ENCODE measurements at regions of chr20 and their contacts with region 1.

Region 1: DNA sequence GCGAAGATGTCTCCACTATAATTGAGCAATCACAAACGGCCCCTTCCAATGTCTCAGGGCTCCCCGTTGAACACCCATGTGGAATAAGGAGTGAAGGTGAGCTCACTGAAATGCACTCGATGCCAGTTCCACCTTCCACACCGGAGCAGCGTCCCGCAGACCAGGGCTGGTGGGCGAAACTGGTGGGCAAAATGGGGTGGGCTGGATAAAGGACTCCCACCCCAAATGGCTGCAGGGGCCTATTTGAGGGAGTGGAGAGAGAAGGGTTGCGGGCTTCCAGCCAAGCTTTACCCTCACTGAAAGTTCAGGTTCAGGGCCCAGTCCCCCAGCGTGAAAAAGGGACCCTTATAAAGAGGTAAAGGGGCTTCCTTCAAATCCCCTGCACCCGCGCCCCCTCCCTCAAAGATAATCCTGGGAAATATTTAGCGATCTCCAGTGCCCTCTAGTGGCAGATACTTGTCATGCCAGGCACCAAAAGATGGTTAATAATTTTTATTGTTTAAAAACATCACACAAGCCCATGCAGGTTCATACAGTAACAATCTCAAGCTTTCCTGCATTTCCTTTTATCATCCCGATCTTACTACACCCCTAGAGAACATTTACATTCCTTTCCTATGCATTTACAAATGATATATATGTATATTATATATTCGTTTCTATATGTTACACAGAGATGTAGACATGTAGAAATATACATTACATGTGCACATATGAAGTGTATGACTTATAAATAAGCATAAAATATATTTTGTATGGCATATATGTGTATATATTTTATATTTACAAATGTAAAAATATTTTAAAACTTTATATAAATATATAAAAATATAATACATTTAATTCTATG is 58.2 kb upstream of the NKX2-2 start:
- DNase-seq: peak in 1 of 2 experiments; percentile 57
- H3K4me3 ChIP-seq: no peak overlapping the region; a peak in 1 of 8 replicates
- H3K27ac ChIP-seq: no peak overlapping the region
- H3K4me1 ChIP-seq: peaks cover 1 to 22% (median 9%) of the 10 kb centered on the region in 4 experiments
- H3K27me3 ChIP-seq: 0 out of 7 replicates have a peak, but pooled peaks cover 0 to 2% (median 0%) of the 10 kb centered on the region in 4 experiments
- CTCF ChIP-seq: peak; percentile 17 to 72 (median 71)
- EP300 ChIP-seq: no peak
- POLR2A ChIP-seq: no peak
- RAD21 ChIP-seq: peak; percentile 79 to 83

Region 2: DNA sequence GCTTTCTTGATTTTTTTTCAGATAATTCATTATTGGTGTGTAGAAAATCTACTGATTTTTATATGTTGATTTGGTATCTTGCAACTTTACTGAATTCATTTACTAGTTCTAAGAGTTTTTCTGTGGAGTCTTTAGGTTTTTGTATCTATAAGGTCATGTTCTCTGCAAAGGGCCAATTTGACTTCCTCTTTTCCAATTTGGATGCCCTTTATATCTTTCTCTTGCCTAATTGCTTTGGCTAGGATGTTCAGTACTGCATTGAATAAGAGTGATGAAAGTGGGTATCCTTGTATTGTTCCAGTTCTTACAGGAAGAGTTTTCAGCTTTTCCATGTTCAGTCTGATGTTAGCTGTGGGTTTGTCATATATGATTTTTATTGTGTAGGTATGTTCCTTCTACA is 160.3 kb before region 1 on chr20:
- CTCF ChIA-PET with region 1: no interaction called
- POLR2A ChIA-PET with region 1: no interaction called
- DNase-seq: no peak
- H3K4me3 ChIP-seq: no peak overlapping the region
- H3K27ac ChIP-seq: no peak overlapping the region
- H3K4me1 ChIP-seq: no peaks in the 10 kb centered on the region
- H3K27me3 ChIP-seq: no peaks in the 10 kb centered on the region
- CTCF ChIP-seq: no peak
- EP300 ChIP-seq: no peak
- POLR2A ChIP-seq: no peak
- RAD21 ChIP-seq: no peak

Region 3: GRCh38 chr20:21520702-21521595 is 51.1 kb before region 1 on chr20:
- CTCF ChIA-PET with region 1: interaction called, 79 read pairs
- POLR2A ChIA-PET with region 1: no interaction called
- DNase-seq: no peak
- H3K4me3 ChIP-seq: peak overlapping the region; percentile 32 to 59 (median 34); a peak in 7 of 8 replicates
- H3K27ac ChIP-seq: no peak overlapping the region
- H3K4me1 ChIP-seq: peaks cover 19 to 53% (median 31%) of the 10 kb centered on the region in 4 experiments
- H3K27me3 ChIP-seq: peaks cover 94 to 100% (median 100%) of the 10 kb centered on the region in 4 experiments
- CTCF ChIP-seq: peak; percentile 59 to 75 (median 72)
- EP300 ChIP-seq: no peak
- POLR2A ChIP-seq: no peak
- RAD21 ChIP-seq: peak; percentile 77 to 85

Region 4: GRCh38 chr20:21529863-21530262 is 42.2 kb before region 1 on chr20:
- CTCF ChIA-PET with region 1: interaction called, 79 read pairs
- POLR2A ChIA-PET with region 1: no interaction called
- DNase-seq: no peak
- H3K4me3 ChIP-seq: no peak overlapping the region
- H3K27ac ChIP-seq: no peak overlapping the region
- H3K4me1 ChIP-seq: peaks cover 0 to 8% (median 0%) of the 10 kb centered on the region in 4 experiments; a peak in 2 of 7 replicates
- H3K27me3 ChIP-seq: peaks cover 9 to 25% (median 15%) of the 10 kb centered on the region in 4 experiments
- CTCF ChIP-seq: peak in 2 of 3 experiments; percentile 51 to 62; a peak in 3 of 4 replicates
- EP300 ChIP-seq: no peak
- POLR2A ChIP-seq: no peak
- RAD21 ChIP-seq: peak; percentile 36 to 51; a peak in 3 of 4 replicates

Region 5: GRCh38 chr20:21548390-21549035 is 23.6 kb before region 1 on chr20:
- CTCF ChIA-PET with region 1: interaction called, 17 read pairs
- POLR2A ChIA-PET with region 1: no interaction called
- DNase-seq: no peak
- H3K4me3 ChIP-seq: no peak overlapping the region
- H3K27ac ChIP-seq: no peak overlapping the region
- H3K4me1 ChIP-seq: no peaks in the 10 kb centered on the region
- H3K27me3 ChIP-seq: no peaks in the 10 kb centered on the region
- CTCF ChIP-seq: no peak
- EP300 ChIP-seq: no peak
- POLR2A ChIP-seq: no peak
- RAD21 ChIP-seq: no peak

Region 6: DNA sequence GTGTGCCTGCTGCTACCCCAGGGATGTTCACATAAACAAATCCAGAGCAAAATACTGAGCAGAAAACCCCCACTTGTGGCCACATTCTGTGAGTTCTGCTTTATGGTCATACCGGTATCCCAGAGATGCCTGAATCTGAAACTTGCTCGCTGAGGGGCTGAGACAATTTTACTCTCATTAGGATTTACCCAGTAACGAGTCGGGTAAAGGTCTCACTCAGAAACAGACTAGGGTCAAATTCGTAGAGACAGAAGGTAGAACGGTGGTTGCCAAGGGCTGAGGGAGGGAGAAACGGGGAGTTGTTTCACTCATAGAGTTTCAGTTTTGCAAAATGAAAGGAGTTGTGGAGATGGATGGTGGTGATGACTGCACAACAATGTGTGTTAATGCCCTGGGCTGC is 12.8 kb before region 1 on chr20:
- CTCF ChIA-PET with region 1: interaction called, 43 read pairs
- POLR2A ChIA-PET with region 1: no interaction called
- DNase-seq: no peak
- H3K4me3 ChIP-seq: no peak overlapping the region
- H3K27ac ChIP-seq: no peak overlapping the region
- H3K4me1 ChIP-seq: peaks cover 0 to 7% (median 0%) of the 10 kb centered on the region in 4 experiments; a peak in 3 of 7 replicates
- H3K27me3 ChIP-seq: no peaks in the 10 kb centered on the region
- CTCF ChIP-seq: no peak
- EP300 ChIP-seq: no peak
- POLR2A ChIP-seq: no peak
- RAD21 ChIP-seq: no peak

Region 7: DNA sequence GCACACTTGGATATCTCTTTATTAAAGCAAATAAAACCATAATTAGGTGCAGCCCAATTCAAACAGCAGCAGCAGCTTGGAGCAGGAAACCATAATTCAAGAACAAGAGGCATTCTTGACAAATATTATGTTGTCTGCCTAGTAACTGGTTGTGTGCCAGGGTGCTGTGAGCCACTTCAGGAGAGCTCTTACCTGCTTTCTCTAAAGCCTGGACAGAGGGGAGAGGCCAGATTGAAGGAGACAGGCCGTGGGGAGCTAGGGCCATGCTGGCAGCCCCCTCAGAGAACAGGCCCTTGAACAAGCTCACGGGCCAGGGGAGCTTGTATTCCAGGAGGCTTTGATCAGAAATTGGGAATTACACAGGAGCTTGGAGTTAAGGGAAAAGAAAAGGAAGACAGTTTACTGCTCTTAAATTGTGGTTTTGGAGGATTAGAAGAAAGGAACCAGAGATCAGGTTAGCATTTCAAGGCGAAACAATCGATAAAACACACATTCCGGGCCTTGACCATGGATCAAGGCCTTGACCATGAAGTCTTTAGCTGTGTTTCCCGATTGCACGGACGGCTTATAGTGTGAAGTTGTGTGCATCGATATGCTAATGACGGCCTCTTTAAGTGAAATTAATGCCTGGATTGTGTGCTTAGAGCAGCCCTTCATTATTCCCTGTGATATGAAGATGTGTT is 11.6 kb after region 1 on chr20:
- CTCF ChIA-PET with region 1: interaction called, 43 read pairs
- POLR2A ChIA-PET with region 1: no interaction called
- DNase-seq: no peak
- H3K4me3 ChIP-seq: no peak overlapping the region
- H3K27ac ChIP-seq: no peak overlapping the region
- H3K4me1 ChIP-seq: no peaks in the 10 kb centered on the region
- H3K27me3 ChIP-seq: peaks cover 0 to 1% (median 0%) of the 10 kb centered on the region in 4 experiments; a peak in 1 of 7 replicates
- CTCF ChIP-seq: no peak
- EP300 ChIP-seq: no peak
- POLR2A ChIP-seq: no peak
- RAD21 ChIP-seq: no peak

Region 8: DNA sequence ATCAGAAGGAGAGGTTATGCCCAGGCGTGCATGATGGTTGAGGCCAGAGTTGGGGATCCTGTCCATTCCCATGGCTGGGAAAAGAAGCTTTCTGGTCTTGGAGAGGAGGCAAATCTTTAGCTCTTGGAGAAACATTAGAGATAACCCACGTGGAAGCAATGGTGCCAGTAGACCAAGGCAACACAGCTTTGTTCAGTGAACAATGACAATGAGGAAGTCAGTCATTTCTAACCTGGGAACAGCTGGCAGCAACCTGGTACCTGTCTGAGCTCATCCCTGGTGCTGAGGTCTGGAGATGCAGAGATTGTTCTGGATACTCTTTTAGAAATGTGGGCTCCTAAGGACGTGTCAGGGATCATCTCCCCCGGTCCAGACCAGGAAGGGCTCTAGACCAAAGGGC is 56.7 kb after region 1 on chr20:
- CTCF ChIA-PET with region 1: no interaction called
- POLR2A ChIA-PET with region 1: no interaction called
- DNase-seq: no peak
- H3K4me3 ChIP-seq: no peak overlapping the region
- H3K27ac ChIP-seq: no peak overlapping the region
- H3K4me1 ChIP-seq: no peaks in the 10 kb centered on the region
- H3K27me3 ChIP-seq: no peaks in the 10 kb centered on the region
- CTCF ChIP-seq: no peak
- EP300 ChIP-seq: no peak
- POLR2A ChIP-seq: no peak
- RAD21 ChIP-seq: no peak